Breast epithelium (tissue), 4 donors: ENCODE measurements at regions of chr16 and their contacts with region 1.

Region 1: DNA sequence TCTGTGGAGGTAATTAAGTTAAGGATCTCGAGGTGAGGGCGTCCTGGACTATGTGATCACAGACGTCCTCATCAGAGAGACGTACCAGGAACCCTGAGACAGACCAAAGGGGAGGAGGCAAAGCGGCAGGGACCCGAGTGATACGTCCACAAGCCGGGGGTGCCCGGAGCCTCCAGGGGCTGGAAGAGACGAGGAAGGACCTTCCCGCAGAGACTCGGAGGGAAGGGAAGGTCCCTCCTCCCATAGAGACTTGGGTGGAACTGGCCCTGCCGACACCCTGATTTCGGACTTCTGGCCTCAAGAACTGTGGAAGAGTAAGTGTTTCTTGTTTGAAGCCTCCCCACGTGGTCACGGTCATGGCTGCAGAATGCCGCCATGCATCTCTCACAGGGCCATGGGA is 30.8 kb downstream of the LMF1 start:
- DNase-seq: no peak
- H3K4me3 ChIP-seq: no peak overlapping the region
- H3K27ac ChIP-seq: no peak overlapping the region
- H3K4me1 ChIP-seq: no peaks in the 10 kb centered on the region
- H3K27me3 ChIP-seq: no peaks in the 10 kb centered on the region
- CTCF ChIP-seq: no peak
- POLR2A ChIP-seq: no peak

Region 2: DNA sequence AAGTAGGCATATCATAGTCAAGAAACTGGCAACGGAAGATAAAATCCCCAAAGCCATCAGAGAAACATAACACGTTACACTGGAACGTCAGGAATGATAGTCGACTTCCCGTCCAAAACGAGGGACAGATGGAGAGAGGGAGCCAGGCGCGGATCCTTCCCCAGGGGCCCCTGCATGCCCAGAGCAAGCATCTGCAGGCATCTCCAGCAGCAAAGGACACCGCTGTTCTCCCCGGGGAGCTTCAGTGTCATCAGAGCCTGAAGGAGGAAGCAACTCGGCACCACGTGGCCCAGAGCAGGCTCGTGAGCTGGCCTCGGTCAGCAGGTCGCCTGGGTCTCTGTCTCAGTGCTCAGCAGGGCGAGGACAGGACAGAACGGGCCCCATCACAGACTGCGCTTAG is 19.2 kb before region 1 on chr16:
- intact Hi-C with region 1: loop called (anchors 1 kb)
- DNase-seq: peak in 1 of 2 donors; percentile 30
- H3K4me3 ChIP-seq: no peak overlapping the region
- H3K27ac ChIP-seq: peak overlapping the region; percentile 45 to 83
- H3K4me1 ChIP-seq: no peaks in the 10 kb centered on the region
- H3K27me3 ChIP-seq: no peaks in the 10 kb centered on the region
- CTCF ChIP-seq: no peak
- POLR2A ChIP-seq: no peak

Region 3: DNA sequence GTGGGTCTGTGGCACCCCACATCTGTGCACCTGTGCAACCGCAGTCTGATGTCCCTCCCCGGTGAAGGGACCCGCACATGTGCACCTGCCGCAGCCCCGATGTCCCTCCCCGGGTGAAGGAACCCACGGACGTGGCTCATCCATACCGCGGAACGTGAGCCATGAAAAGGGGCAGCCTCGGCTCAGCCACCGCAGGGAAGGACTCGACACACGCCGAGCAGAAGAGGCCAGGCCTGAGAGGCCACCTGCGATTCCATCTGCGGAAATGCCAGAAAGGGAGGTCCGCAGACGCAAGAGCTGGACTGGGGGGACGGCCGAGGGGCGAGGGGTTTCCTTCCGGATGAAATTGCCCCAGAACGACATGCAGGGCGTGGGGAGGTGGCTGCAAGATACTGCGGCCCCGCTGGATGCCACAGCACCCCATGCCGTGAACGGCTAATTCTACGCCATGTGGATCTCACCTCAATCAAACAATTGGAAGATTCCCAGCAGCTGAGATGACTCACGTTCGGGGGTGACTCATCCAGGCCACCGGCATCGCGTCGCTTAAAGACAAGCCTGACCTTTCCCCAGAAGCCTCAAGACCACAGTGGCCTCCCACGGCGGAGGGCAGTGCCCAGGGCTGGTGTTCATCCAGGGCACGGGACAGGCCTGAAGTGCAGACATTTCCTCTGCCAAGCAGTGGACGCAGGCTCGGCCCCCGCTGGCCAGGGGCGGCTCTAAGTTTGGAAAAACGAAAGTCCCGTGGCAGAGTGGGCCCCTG is 62.6 kb after region 1 on chr16:
- intact Hi-C with region 1: no loop called
- DNase-seq: peak; percentile 62 to 63
- H3K4me3 ChIP-seq: peak overlapping the region in 1 of 3 donors; percentile 30
- H3K27ac ChIP-seq: no peak overlapping the region
- H3K4me1 ChIP-seq: no peaks in the 10 kb centered on the region
- H3K27me3 ChIP-seq: peaks cover 0 to 45% of the 10 kb centered on the region in 2 donors
- CTCF ChIP-seq: no peak
- POLR2A ChIP-seq: no peak